ENCODE measurements at regions of chr1 and their contacts with region 1.

Region 1: GRCh38 chr1:11719313-11720032 is 16.5 kb upstream of the AGTRAP start:
- DNase-seq: peak; percentile 91
- ATAC-seq: peak; percentile 85
- H3K4me3 Mint-ChIP-seq: peak overlapping the region; percentile 70
- H3K27ac Mint-ChIP-seq: peak overlapping the region; percentile 71
- H3K4me1 Mint-ChIP-seq: peaks cover 13% of the 10 kb centered on the region
- H3K27me3 Mint-ChIP-seq: no peaks in the 10 kb centered on the region

Region 2: GRCh38 chr1:11478571-11479374 is 240.7 kb before region 1 on chr1 and contains the start of gene DISP3:
- CTCF ChIA-PET with region 1: no interaction called
- POLR2A ChIA-PET with region 1: no interaction called
- intact Hi-C with region 1: loop called in 1 of 2 experiments (anchors 1 kb)
- DNase-seq: peak; percentile 89
- ATAC-seq: peak; percentile 89
- H3K4me3 Mint-ChIP-seq: peak within 1 kb of the TSS; percentile 53
- H3K27ac Mint-ChIP-seq: no peak within 1 kb of the TSS
- H3K4me1 Mint-ChIP-seq: peaks cover 5% of the 10 kb centered on the region
- H3K27me3 Mint-ChIP-seq: peaks cover 33% of the 10 kb centered on the region
- total RNA-seq, gene DISP3: 0.55 to 0.58 TPM

Region 3: GRCh38 chr1:11531314-11531870 is 188.1 kb before region 1 on chr1:
- CTCF ChIA-PET with region 1: no interaction called
- POLR2A ChIA-PET with region 1: no interaction called
- intact Hi-C with region 1: no loop called
- DNase-seq: no peak
- ATAC-seq: no peak
- H3K4me3 Mint-ChIP-seq: no peak overlapping the region
- H3K27ac Mint-ChIP-seq: no peak overlapping the region
- H3K4me1 Mint-ChIP-seq: no peaks in the 10 kb centered on the region
- H3K27me3 Mint-ChIP-seq: no peaks in the 10 kb centered on the region

Region 4: DNA sequence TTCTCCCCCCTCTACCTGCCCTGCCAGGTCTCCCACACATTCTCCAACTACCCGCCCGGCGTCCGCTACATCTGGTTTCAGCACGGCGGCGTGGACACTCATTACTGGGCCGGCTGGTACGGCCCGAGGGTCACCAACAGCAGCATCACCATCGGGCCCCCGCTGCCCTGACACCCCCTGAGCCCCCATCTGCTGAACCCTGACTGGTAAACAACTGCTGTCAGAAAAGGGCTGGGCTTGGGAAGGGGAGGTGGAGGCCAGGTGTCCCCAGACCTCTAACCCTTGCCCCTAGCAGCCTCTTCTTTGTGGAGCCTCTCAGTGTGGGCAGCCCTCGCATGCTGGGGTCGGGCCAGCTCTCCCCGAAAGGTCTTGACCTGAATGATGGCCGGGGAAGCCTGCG is 58.4 kb before region 1 on chr1:
- CTCF ChIA-PET with region 1: interaction called, 19 read pairs
- POLR2A ChIA-PET with region 1: interaction called, 8 read pairs
- intact Hi-C with region 1: loop called (anchors 1 kb)
- DNase-seq: no peak
- ATAC-seq: no peak
- H3K4me3 Mint-ChIP-seq: no peak overlapping the region
- H3K27ac Mint-ChIP-seq: no peak overlapping the region
- H3K4me1 Mint-ChIP-seq: no peaks in the 10 kb centered on the region
- H3K27me3 Mint-ChIP-seq: no peaks in the 10 kb centered on the region

Region 5: DNA sequence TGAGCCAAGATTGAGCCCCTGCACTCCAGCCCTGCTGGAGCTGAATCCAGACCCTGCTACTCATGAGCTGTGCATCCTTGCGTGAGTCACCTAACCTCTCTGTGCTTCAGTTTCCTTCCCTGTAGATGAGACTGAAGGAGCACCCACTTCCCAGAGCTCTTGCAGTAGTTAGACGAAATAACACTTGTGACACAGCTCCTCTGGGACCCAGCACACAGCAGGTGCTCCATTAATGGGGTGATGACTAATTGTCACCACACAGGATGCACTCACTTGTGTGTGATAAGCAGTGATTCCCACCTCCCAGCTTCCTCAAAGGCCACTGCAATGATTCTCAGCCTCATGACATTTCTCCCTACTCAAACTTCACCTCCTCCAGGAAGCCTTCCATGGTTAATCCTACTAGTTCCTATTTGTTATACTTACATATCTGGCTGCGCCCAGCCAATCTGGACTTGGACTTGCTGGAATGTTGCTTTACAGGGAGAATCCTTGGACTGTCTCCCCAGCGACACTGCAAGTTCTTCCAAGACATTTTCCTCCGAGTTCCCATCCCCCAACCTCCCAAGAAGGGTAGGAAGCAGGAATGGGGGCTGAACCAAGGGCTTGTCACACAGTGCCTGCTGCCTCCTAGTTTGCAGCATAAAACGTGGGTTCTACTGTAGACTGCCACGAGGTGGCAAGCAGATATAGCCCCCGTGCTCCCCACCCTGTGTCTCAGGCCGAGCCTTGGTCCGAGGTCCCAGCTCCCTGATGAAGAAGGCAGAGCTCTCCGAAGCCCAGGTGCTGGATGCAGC is 10.7 kb before region 1 on chr1:
- CTCF ChIA-PET with region 1: interaction called, 13 read pairs
- POLR2A ChIA-PET with region 1: no interaction called
- intact Hi-C with region 1: no loop called
- DNase-seq: no peak
- ATAC-seq: peak; percentile 51
- H3K4me3 Mint-ChIP-seq: no peak overlapping the region
- H3K27ac Mint-ChIP-seq: no peak overlapping the region
- H3K4me1 Mint-ChIP-seq: no peaks in the 10 kb centered on the region
- H3K27me3 Mint-ChIP-seq: peaks cover 4% of the 10 kb centered on the region

Region 6: GRCh38 chr1:12275369-12275768 is 555.9 kb after region 1 on chr1:
- CTCF ChIA-PET with region 1: no interaction called
- POLR2A ChIA-PET with region 1: no interaction called
- intact Hi-C with region 1: no loop called
- DNase-seq: peak; percentile 74
- ATAC-seq: no peak
- H3K4me3 Mint-ChIP-seq: no peak overlapping the region
- H3K27ac Mint-ChIP-seq: no peak overlapping the region
- H3K4me1 Mint-ChIP-seq: no peaks in the 10 kb centered on the region
- H3K27me3 Mint-ChIP-seq: no peaks in the 10 kb centered on the region

Measured in activated CD4-positive, alpha-beta T cell treated with anti-CD3 and anti-CD28 coated beads for 36 hours (primary cell).